PC-3 (cell line): ENCODE measurements at regions of chr9 and their contacts with region 1.

Region 1: DNA sequence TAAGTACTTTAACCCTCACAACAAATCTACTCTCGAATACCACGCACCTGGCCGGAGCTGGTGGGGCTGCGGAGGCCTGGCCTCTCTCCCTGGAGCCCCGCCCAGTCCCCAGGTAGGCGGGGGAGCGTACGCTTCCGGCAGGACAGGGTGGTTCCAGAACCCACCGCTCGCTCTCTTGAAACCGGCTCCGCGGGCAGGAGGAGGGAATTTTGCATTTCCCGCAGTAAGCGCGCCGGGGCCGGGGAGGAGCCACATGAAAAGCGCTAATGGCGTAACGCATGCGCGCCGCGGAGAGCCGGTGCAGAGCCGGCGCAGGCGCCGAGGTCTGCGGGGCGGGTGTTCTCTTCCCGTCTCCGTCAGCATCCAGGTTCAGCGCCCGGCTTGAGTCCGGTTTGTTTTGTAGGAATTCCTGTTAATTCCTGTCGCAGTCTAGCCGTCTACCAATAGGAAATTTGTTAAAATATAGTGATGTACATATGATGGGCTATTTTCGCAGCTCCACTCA is 20.8 kb downstream of the CAVIN4 start:
- DNase-seq: peak; percentile 82
- ATAC-seq: peak; percentile 84
- H3K4me3 ChIP-seq: peak overlapping the region; percentile 76
- H3K27ac ChIP-seq: no peak overlapping the region
- H3K4me1 ChIP-seq: no peaks in the 10 kb centered on the region
- H3K27me3 ChIP-seq: no peaks in the 10 kb centered on the region
- CTCF ChIP-seq: no peak

Region 2: DNA sequence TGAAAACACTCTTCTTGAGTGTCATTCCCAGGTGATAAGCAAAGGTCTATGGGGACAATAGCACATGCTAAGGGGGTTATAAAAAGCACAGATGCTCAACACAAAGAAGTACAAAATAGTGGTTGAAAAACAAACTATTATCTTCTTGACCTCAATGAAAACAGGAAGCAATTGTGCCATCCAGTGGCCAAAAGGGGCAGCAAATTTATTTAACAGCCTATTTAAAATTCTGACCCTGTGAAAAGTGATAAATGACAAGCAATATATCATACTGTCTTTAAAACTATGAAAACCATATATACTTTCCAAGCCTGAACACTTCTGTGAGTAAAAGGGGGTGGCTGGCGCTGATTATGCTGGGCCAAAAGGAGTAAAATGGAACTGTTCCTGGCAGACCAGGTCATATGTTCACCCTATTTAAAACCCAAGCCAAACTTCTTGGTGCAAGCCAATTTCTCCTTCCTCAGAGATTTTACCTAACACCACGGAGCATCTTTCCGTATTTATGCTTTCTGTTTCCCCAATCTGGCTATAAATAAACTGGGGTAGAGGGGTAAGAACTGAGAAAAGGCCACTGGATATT is 275.6 kb before region 1 on chr9:
- CTCF ChIA-PET with region 1: no interaction called
- POLR2A ChIA-PET with region 1: no interaction called
- intact Hi-C with region 1: loop called (anchors 5 kb)
- DNase-seq: peak; percentile 44
- ATAC-seq: no peak
- H3K4me3 ChIP-seq: no peak overlapping the region
- H3K27ac ChIP-seq: no peak overlapping the region
- H3K4me1 ChIP-seq: peaks cover under 1% of the 10 kb centered on the region
- H3K27me3 ChIP-seq: no peaks in the 10 kb centered on the region
- CTCF ChIP-seq: peak; percentile 72

Region 3: DNA sequence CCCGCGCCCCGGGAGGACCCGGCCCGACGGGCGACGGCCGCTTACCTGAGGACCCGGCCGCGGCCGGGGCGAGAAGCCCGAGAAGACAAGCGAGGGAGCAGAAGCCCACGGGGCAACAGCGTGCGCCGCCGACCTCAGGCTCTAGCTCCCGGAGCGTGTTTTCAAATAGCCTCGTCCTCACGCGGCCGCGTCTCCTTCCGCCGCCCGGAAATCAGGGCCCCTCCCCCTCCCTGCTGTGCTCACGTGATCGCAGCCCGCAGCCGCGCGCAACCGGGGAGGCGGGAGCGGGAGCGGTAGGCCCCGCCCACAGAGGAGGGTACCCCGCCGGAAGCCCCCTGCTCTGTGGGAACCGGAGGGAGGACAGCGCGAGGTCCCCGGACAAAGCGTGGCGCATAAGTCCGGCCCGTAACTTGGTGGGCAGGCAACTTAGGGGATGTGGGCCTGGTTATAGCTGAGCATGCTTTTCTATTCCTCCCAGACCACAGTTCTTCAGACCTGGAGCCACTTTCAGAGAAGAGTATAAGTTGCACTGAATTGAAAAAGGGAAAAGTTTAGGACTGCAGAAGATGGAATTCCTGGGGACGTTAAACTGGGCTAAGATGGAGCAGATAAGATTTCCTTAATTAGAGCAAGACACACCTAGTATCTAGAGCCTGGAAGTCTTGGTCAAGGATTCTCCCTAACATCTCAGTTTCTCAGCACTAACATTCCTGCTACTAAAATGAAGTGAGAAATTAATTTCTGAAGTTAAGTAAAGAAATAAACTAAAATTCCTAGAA is 245.8 kb before region 1 on chr9 and contains the start of gene TEX10:
- CTCF ChIA-PET with region 1: no interaction called
- POLR2A ChIA-PET with region 1: no interaction called
- intact Hi-C with region 1: loop called (anchors 10 kb)
- DNase-seq: peak; percentile 75
- ATAC-seq: peak; percentile 76
- H3K4me3 ChIP-seq: peak within 1 kb of the TSS; percentile 86
- H3K27ac ChIP-seq: peak within 1 kb of the TSS; percentile 55
- H3K4me1 ChIP-seq: peaks cover 18% of the 10 kb centered on the region
- H3K27me3 ChIP-seq: no peaks in the 10 kb centered on the region
- CTCF ChIP-seq: no peak
- total RNA-seq, gene TEX10: 19.4 and 22.1 TPM in 2 replicates

Region 4: GRCh38 chr9:100505564-100506159 is 93.0 kb before region 1 on chr9:
- CTCF ChIA-PET with region 1: interaction called, 3 read pairs
- POLR2A ChIA-PET with region 1: no interaction called
- intact Hi-C with region 1: loop called (anchors 1 kb)
- DNase-seq: peak; percentile 87
- ATAC-seq: peak; percentile 55
- H3K4me3 ChIP-seq: no peak overlapping the region
- H3K27ac ChIP-seq: no peak overlapping the region
- H3K4me1 ChIP-seq: no peaks in the 10 kb centered on the region
- H3K27me3 ChIP-seq: no peaks in the 10 kb centered on the region
- CTCF ChIP-seq: peak; percentile 91

Region 5: DNA sequence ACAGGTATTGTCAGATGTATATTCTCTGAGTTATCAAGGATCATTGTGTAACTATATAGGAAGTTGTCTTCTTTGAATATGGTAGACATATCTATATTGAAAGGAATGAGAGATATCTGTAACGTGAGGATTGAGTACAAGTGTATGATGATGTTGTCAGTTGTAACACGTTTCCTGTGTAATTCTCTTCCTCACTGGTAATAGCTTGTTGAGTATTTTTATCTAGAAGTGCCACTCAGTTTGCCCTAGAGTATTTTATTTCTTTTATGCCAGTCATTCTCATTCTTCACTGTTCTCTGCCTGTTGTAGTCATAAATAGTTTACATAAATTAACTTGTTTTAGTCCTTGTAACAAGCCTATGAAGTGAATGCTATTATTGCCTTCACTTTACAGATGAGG is 614.0 kb after region 1 on chr9:
- CTCF ChIA-PET with region 1: no interaction called
- POLR2A ChIA-PET with region 1: no interaction called
- intact Hi-C with region 1: no loop called
- DNase-seq: no peak
- ATAC-seq: no peak
- H3K4me3 ChIP-seq: no peak overlapping the region
- H3K27ac ChIP-seq: no peak overlapping the region
- H3K4me1 ChIP-seq: no peaks in the 10 kb centered on the region
- H3K27me3 ChIP-seq: no peaks in the 10 kb centered on the region
- CTCF ChIP-seq: no peak

Region 6: GRCh38 chr9:101311758-101312420 is 713.2 kb after region 1 on chr9:
- CTCF ChIA-PET with region 1: interaction called, 33 read pairs
- POLR2A ChIA-PET with region 1: no interaction called
- intact Hi-C with region 1: loop called (anchors 1 kb)
- DNase-seq: peak; percentile 78
- ATAC-seq: peak; percentile 74
- H3K4me3 ChIP-seq: no peak overlapping the region
- H3K27ac ChIP-seq: no peak overlapping the region
- H3K4me1 ChIP-seq: no peaks in the 10 kb centered on the region
- H3K27me3 ChIP-seq: 0 out of 2 replicates have a peak, but pooled peaks cover 5% of the 10 kb centered on the region
- CTCF ChIP-seq: peak; percentile 69

Region 7: GRCh38 chr9:101387871-101388506 is 789.3 kb after region 1 on chr9:
- CTCF ChIA-PET with region 1: no interaction called
- POLR2A ChIA-PET with region 1: no interaction called
- intact Hi-C with region 1: loop called (anchors 5 kb)
- DNase-seq: peak; percentile 51
- ATAC-seq: no peak; the same call in 1 of the 2 replicates
- H3K4me3 ChIP-seq: no peak overlapping the region
- H3K27ac ChIP-seq: no peak overlapping the region
- H3K4me1 ChIP-seq: no peaks in the 10 kb centered on the region
- H3K27me3 ChIP-seq: no peaks in the 10 kb centered on the region
- CTCF ChIP-seq: peak; percentile 64